Right cardiac atrium (tissue), 5 donors: ENCODE measurements at regions of chr2 and their contacts with region 1.

Region 1: GRCh38 chr2:168118733-168119514 is 128.5 kb downstream of the STK39 start:
- DNase-seq: no peak
- ATAC-seq: peak; percentile 72 to 73
- H3K4me3 ChIP-seq: no peak overlapping the region
- H3K27ac ChIP-seq: no peak overlapping the region
- H3K4me1 ChIP-seq: no peaks in the 10 kb centered on the region
- H3K27me3 ChIP-seq: no peaks in the 10 kb centered on the region

Region 2: DNA sequence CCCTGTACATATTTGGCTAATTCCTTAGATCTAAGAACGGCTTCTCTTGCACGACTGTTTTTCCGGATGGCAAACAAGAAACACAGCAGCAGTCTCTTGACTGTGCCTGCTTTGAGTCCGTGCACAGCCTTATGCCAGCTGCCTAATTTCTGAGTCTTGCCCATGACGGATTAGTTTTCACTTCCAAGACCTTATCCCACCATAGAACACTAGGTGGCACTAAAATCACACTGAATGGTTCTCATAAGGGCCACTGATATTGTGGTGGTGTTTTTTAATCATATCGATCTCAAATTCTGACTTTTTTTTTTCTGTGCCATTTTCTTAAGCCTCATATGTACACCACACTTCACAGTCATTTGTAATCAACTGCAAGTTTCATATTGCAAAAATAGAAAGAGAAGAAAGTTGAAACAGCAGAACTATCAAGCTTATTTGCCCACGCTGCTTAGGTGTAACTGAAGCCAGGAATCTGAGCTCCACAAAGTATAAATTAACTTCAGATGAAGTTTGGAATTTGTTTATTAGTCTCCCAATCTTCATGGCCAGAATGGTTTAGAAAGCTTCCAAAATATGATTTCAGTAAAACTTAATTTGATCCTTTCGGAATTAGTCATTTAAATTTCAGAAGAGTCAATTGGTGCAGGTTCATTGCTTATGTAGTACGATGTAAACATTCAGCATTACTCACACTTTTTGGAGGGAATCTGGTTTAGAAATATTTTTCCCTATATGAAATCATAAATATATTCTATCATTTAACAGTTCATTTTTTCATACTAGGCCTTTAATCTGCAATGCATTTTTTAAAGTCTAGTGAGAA is 1579.4 kb before region 1 on chr2:
- intact Hi-C with region 1: loop called in 2 of 4 experiments (anchors 10 kb)
- DNase-seq: no peak
- ATAC-seq: peak; percentile 73 to 79
- H3K4me3 ChIP-seq: no peak overlapping the region
- H3K27ac ChIP-seq: no peak overlapping the region
- H3K4me1 ChIP-seq: no peaks in the 10 kb centered on the region
- H3K27me3 ChIP-seq: no peaks in the 10 kb centered on the region

Region 3: GRCh38 chr2:167964650-167965413 is 154.1 kb before region 1 on chr2:
- intact Hi-C with region 1: loop called in 1 of 4 experiments (anchors 10 kb)
- DNase-seq: no peak
- ATAC-seq: no peak
- H3K4me3 ChIP-seq: no peak overlapping the region
- H3K27ac ChIP-seq: no peak overlapping the region
- H3K4me1 ChIP-seq: no peaks in the 10 kb centered on the region
- H3K27me3 ChIP-seq: no peaks in the 10 kb centered on the region

Region 4: GRCh38 chr2:168050377-168050776 is 68.5 kb before region 1 on chr2:
- intact Hi-C with region 1: no loop called
- DNase-seq: no peak
- ATAC-seq: no peak
- H3K4me3 ChIP-seq: no peak overlapping the region
- H3K27ac ChIP-seq: no peak overlapping the region
- H3K4me1 ChIP-seq: no peaks in the 10 kb centered on the region
- H3K27me3 ChIP-seq: no peaks in the 10 kb centered on the region

Region 5: DNA sequence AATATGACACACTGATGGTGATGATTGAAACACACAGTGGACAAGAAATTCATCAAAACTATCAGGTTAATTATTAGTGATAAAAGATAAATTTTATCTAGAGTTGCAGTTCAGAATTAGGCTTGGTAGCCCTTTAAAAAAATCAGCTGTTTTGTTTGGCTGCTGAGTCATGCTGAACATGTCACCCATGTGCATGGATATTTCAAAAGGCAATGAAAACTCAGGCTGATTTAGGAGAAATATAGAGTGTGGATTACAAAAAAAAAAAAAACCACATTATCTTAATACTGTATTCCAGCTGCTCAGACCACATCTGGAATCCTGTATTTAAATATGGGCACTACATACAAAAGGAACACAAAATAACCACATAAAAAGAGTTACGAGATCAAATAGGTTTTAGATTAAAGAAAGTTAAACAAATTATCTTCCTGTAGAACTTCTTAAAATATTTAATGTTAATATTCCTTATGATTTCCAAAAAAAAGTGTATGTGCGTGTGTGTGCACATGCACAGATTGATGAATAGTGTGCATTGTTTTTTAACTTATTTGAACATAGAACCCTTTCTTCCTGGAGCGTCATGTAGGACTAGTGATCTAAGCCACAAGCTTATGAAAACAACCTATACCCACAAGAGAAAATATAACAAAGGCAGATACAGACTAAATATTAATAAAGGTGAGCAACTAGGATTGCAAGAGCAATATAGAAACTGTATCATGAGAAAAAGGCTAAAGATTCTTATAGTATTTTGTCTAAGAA is 57.8 kb before region 1 on chr2:
- intact Hi-C with region 1: no loop called
- DNase-seq: no peak
- ATAC-seq: no peak
- H3K4me3 ChIP-seq: no peak overlapping the region
- H3K27ac ChIP-seq: no peak overlapping the region
- H3K4me1 ChIP-seq: no peaks in the 10 kb centered on the region
- H3K27me3 ChIP-seq: no peaks in the 10 kb centered on the region

Region 6: DNA sequence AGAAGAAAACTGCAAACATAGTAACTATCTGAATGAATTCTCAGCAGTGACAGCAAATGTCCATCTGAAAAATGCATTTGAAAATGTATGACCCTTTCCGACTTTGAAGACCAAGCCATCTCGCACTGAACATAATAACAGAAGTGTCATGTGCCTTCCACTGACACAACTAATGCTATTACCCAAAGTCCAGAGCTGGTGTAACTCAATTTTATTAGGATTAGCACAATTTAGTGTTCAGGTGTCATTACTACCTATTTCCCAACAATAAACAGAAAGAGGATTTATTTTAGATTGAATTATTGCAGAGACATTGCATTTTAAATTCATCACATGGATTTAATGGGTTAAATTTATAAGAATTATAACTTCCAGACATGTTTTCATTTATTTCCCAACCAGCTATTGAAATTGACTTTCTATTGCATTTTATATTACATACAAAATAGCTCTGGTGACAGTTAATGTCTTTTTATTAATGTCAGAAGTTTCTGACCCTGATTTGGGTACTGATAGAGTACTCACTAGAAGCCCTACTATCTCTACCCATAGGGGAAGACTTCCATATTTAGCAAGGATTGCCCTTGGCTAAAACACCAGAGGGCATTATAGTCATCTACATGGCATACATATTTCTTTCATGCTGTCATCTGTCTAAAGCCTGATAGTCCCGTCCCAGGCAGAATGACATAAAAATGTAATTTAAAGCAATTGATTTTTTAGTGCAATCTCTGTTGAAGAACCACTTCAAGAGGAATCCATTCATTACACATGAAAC is 135.4 kb after region 1 on chr2:
- intact Hi-C with region 1: no loop called
- DNase-seq: no peak
- ATAC-seq: no peak
- H3K4me3 ChIP-seq: no peak overlapping the region
- H3K27ac ChIP-seq: no peak overlapping the region
- H3K4me1 ChIP-seq: no peaks in the 10 kb centered on the region
- H3K27me3 ChIP-seq: no peaks in the 10 kb centered on the region